ENCODE measurements at regions of chr3 and their contacts with region 1.

Region 1: GRCh38 chr3:111594205-111594604 is 941 bp downstream of the ZBED2 start:
- DNase-seq: no peak
- H3K4me3 Mint-ChIP-seq: peak overlapping the region; percentile 28
- H3K27ac Mint-ChIP-seq: peak overlapping the region; percentile 73
- H3K4me1 Mint-ChIP-seq: peaks cover 68% of the 10 kb centered on the region
- H3K27me3 Mint-ChIP-seq: no peaks in the 10 kb centered on the region

Region 2: DNA sequence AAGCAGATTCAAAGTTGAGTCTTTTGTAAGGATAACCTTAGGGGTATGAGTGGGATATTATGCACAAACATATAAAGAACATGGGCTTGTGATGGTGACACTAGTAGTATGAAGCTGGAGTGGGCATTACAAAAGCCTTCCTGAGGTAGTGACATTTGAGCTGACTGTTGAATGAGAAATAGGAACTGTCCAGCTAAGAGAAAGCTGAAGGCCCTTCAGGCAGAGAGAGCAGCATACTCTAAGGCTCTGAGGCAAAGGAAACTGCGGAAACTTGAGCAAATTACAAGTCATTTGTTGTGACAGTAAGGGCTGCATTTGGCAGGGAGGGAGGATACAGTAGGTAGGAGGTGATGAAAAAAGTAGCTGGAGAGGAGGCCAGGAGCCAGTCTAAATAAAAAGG is 242.9 kb before region 1 on chr3:
- CTCF ChIA-PET with region 1: no interaction called
- POLR2A ChIA-PET with region 1: no interaction called
- DNase-seq: no peak
- H3K4me3 Mint-ChIP-seq: no peak overlapping the region
- H3K27ac Mint-ChIP-seq: no peak overlapping the region
- H3K4me1 Mint-ChIP-seq: no peaks in the 10 kb centered on the region
- H3K27me3 Mint-ChIP-seq: peaks cover under 1% of the 10 kb centered on the region

Region 3: DNA sequence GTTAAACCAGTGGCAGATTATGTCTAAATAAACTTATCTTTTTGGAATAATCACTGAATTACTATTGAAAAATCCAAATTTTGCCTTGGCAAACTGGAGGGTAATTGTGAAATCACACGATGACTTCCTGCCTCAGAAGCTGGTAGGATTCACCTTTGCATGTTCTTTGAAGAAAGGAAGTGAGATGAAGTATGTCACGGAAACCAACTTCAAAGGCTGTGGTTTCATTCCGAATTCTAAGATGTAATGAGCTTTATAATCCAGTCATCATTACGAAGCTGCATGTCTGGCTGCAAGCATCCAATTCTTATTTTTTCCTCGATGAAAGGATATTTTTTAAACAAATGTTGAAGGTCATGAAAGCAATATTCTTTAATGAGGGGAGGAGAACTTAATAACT is 16.0 kb after region 1 on chr3:
- CTCF ChIA-PET with region 1: interaction called, 34 read pairs
- POLR2A ChIA-PET with region 1: no interaction called
- DNase-seq: peak; percentile 83
- H3K4me3 Mint-ChIP-seq: peak overlapping the region; percentile 59
- H3K27ac Mint-ChIP-seq: peak overlapping the region; percentile 90
- H3K4me1 Mint-ChIP-seq: peaks cover 92% of the 10 kb centered on the region
- H3K27me3 Mint-ChIP-seq: no peaks in the 10 kb centered on the region

Measured in activated CD4-positive, alpha-beta T cell treated with anti-CD3 and anti-CD28 coated beads, Interleukin-2, amount 10 ng/mL, durations not matched to agents 7 days and 5 days (primary cell).